Heart right ventricle (tissue), 16 donors: ENCODE measurements at regions of chr3 and their contacts with region 1.

Region 1: GRCh38 chr3:113279686-113280085 is 68.3 kb downstream of the BOC start:
- DNase-seq: no peak
- ATAC-seq: no peak
- H3K4me3 ChIP-seq: no peak overlapping the region
- H3K27ac ChIP-seq: no peak overlapping the region
- H3K4me1 ChIP-seq: peaks cover 0 to 25% (median 13%) of the 10 kb centered on the region in 9 donors
- H3K27me3 ChIP-seq: no peaks in the 10 kb centered on the region
- CTCF ChIP-seq: no peak

Region 2: GRCh38 chr3:113057117-113057516 is 222.6 kb before region 1 on chr3:
- intact Hi-C with region 1: loop called in 2 of 10 experiments (anchors 2 to 5 kb)
- DNase-seq: no peak
- ATAC-seq: no peak
- H3K4me3 ChIP-seq: no peak overlapping the region
- H3K27ac ChIP-seq: no peak overlapping the region
- H3K4me1 ChIP-seq: peaks cover 0 to 21% (median 0%) of the 10 kb centered on the region in 9 donors
- H3K27me3 ChIP-seq: no peaks in the 10 kb centered on the region
- CTCF ChIP-seq: no peak

Region 3: DNA sequence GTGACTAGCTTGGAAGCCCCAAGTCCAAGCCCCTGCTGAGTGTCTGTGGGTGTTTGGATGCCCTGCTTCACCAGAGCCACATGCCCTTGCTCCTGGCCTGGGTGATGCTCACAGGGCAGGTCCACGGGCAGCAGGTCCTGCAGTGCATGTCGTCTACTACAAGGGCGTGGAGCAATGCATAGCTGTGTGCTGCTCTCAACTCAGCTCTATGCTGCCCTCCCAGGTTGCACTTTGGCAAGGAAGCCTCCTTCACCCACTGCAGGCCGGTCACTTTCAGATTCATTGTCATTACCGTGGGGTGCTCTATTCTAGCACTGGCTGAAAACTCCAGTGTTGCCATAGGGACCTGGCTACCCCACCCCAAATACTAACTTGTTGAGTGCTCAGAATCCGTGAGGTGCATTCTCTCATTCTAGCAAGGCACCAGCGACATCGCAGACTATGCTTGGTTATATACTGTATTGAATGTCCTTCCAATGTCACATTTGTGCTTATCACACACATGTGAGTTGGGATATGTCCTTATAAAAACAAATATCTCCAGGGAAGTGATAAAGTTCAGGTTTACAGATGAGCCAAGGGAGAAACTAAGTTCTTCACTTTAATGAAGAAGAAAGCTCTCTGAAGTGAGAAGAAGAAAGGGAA is 610.7 kb after region 1 on chr3:
- intact Hi-C with region 1: no loop called
- DNase-seq: no peak
- ATAC-seq: peak in 1 of 8 donors; percentile 24
- H3K4me3 ChIP-seq: no peak overlapping the region
- H3K27ac ChIP-seq: no peak overlapping the region
- H3K4me1 ChIP-seq: no peaks in the 10 kb centered on the region
- H3K27me3 ChIP-seq: no peaks in the 10 kb centered on the region
- CTCF ChIP-seq: no peak